Aorta (tissue), 5 donors: ENCODE measurements at regions of chr3 and their contacts with region 1.

Region 1: GRCh38 chr3:139935016-139935865 is at the start of gene CLSTN2:
- DNase-seq: peak; percentile 71 to 91
- ATAC-seq: peak; percentile 87
- H3K4me3 ChIP-seq: peak within 1 kb of the TSS in 1 of 2 donors; percentile 23
- H3K27ac ChIP-seq: no peak within 1 kb of the TSS
- H3K4me1 ChIP-seq: no peaks in the 10 kb centered on the region
- H3K27me3 ChIP-seq: no peaks in the 10 kb centered on the region
- total RNA-seq, gene CLSTN2: 18.0 to 20.6 TPM

Region 2: GRCh38 chr3:139893267-139893962 is 41.8 kb before region 1 on chr3:
- intact Hi-C with region 1: no loop called
- DNase-seq: no peak
- ATAC-seq: peak; percentile 85
- H3K4me3 ChIP-seq: no peak overlapping the region
- H3K27ac ChIP-seq: no peak overlapping the region
- H3K4me1 ChIP-seq: no peaks in the 10 kb centered on the region
- H3K27me3 ChIP-seq: no peaks in the 10 kb centered on the region

Region 3: GRCh38 chr3:140051019-140051957 is 116.0 kb after region 1 on chr3:
- intact Hi-C with region 1: loop called in 1 of 2 experiments (anchors 2 kb)
- DNase-seq: no peak
- ATAC-seq: no peak
- H3K4me3 ChIP-seq: no peak overlapping the region
- H3K27ac ChIP-seq: no peak overlapping the region
- H3K4me1 ChIP-seq: no peaks in the 10 kb centered on the region
- H3K27me3 ChIP-seq: no peaks in the 10 kb centered on the region

Region 4: DNA sequence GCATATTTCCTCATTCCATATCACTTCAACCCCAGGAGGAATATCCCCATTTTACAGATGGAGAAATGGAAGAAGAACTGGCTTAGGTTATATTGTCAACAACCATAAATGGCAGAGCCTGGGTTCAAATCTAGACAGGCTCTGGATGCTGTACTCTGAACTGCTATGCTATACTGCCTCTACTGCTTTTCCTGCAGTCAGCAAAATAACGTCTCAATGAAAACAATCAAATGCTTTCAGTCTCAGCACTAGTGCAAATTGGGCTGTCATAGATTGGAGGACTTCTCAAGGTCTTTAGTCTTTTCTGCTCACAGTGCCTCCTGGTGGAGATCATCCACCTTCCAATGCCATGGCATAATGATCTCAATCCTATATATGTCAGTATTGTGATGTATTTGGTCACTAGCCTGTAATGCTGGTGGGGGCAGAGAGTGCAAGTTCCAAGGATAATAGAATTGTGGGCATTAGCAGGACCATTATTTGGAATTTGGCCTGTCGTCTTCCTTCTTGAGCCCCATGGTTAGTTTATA is 284.7 kb after region 1 on chr3:
- intact Hi-C with region 1: no loop called
- DNase-seq: no peak
- ATAC-seq: no peak
- H3K4me3 ChIP-seq: no peak overlapping the region
- H3K27ac ChIP-seq: no peak overlapping the region
- H3K4me1 ChIP-seq: no peaks in the 10 kb centered on the region
- H3K27me3 ChIP-seq: no peaks in the 10 kb centered on the region

Region 5: DNA sequence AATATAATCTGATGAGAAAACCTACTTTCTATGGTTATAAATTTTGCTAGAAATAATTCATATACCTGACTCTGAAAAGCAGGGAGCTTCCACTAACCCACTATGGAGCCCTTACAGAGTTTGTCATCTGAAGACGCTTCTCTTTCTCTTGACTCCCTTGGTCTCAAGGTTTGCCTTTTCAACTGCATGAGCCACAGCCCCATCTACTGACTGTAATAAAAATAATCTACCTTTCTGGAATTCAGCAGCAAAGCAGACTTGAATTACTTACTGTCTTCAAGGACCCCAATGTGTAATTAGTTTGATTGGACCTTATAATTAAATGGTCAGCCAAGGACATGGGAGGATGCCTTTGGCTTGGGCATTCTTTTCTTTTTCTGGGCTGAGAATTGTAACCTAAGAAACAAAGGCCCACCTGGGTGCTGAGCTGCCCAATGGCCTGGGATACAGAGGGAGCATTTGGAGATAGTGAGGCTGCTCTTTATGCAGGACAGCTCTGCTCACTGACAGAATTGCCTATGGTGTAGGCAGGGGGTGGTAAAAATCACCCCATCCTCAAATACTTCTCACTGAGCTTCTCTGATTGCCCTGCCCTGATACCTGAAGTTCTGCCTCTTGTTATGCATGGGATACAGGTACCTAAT is 564.0 kb after region 1 on chr3:
- intact Hi-C with region 1: loop called in 1 of 2 experiments (anchors 5 kb)
- DNase-seq: no peak
- ATAC-seq: no peak
- H3K4me3 ChIP-seq: no peak overlapping the region
- H3K27ac ChIP-seq: no peak overlapping the region
- H3K4me1 ChIP-seq: no peaks in the 10 kb centered on the region
- H3K27me3 ChIP-seq: no peaks in the 10 kb centered on the region

Region 6: GRCh38 chr3:140736863-140737460 is 801.7 kb after region 1 on chr3:
- intact Hi-C with region 1: no loop called
- DNase-seq: peak; percentile 51 to 79
- ATAC-seq: peak; percentile 61
- H3K4me3 ChIP-seq: no peak overlapping the region
- H3K27ac ChIP-seq: no peak overlapping the region
- H3K4me1 ChIP-seq: peaks cover 0 to 1% of the 10 kb centered on the region in 2 donors
- H3K27me3 ChIP-seq: no peaks in the 10 kb centered on the region